GM10248 (cell line): ENCODE measurements at regions of chr15 and their contacts with region 1.

Region 1: DNA sequence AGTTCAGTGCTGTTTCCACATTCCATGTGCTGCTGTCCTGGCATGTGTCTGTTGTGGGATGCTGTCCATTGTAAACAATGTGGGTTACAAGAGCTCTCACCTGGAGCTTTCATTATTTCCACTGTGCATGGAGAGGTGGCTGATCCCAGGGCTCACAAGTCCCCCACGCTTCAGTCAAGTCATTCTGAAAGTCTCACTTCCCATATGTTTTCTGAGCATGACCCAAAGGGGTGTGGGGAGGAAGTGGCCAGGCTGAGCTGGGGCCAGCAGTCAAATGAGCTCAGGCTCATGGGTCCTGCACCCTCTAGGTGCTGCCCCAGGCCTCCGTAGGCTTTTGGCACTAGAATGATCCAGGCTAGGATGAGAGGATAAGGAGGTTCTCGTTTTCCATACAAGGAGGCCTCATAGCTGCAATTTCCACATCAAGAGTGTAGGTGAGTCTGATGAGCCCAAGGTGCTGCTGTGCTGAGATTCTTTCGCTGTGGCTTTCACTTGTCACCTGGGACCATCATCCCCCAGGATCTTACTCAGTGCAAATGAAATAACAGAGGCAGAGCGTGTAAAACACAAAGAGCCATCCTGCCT is 22.0 kb downstream of the STARD5 start:
- DNase-seq: peak; percentile 63
- CTCF ChIP-seq: no peak

Region 2: DNA sequence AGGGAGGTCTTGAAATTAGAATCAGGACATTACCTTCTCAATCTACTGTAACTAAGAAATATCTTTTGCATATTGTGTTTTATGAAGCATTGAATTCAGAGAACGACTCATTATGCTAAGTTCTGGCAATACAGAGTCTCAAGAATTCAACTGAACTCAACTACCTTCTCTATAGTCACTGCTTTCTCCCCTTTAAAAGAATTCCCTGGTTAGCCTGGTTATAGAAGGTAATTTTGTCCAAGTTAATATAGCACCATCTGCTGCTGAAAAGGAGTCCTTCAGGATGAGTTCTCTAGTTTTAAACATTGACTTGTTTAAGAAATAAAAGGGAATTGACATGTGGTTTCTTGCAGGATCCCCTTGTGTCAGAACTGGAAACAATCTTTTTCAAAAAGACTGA is 45.0 kb before region 1 on chr15:
- CTCF ChIA-PET with region 1: no interaction called
- POLR2A ChIA-PET with region 1: no interaction called
- DNase-seq: no peak
- CTCF ChIP-seq: peak; percentile 23

Region 3: DNA sequence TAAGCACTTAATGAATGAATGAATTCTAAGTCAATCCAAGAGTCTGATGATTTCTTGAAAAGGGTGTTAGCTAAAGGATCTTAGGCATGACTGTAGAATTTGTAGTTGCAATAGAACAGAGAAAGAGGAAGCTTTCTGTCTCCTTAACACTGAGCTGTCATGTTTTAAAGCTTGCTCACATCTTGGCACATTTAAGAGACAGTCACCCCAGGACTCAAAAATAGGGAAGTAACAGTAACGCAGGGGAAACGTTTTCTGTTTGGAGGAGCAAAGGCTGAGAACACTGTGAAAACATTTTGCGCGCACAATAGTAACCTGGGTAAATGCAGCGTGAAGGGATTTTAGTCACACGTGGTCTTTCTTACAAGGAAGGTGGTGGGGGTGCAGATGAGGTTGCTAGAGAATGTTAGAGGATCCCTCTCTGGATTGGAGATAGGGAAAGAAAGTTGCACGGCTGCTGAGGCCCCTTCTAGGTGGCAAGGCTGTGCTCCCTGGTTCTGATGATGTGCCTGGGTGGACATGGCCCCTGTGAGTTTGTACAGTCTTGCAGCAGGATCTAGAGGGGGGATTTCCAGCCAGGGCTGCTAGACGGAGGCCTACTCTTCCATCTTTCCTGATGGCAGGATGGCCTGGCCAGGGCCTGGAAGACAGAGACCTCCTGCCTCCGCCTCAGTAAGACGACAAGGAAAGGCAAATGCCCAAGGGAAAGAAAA is 10.0 kb after region 1 on chr15:
- CTCF ChIA-PET with region 1: interaction called, 20 read pairs
- POLR2A ChIA-PET with region 1: interaction called, 17 read pairs
- DNase-seq: peak; percentile 47
- CTCF ChIP-seq: no peak

Region 4: GRCh38 chr15:81469154-81469553 is 167.2 kb after region 1 on chr15:
- CTCF ChIA-PET with region 1: no interaction called
- POLR2A ChIA-PET with region 1: no interaction called
- DNase-seq: no peak
- CTCF ChIP-seq: no peak